Thyroid gland (tissue), 4 donors: ENCODE measurements at regions of chr9 and their contacts with region 1.

Region 1: GRCh38 chr9:137305060-137305797 is 3.2 kb upstream of the NRARP start:
- DNase-seq: peak in 1 of 2 donors; percentile 27
- H3K4me3 ChIP-seq: no peak overlapping the region
- H3K27ac ChIP-seq: peak overlapping the region; percentile 32 to 71 (median 68)
- H3K4me1 ChIP-seq: peaks cover 31 to 56% of the 10 kb centered on the region in 2 donors
- H3K27me3 ChIP-seq: no peaks in the 10 kb centered on the region
- CTCF ChIP-seq: no peak
- POLR2A ChIP-seq: no peak

Region 2: GRCh38 chr9:137070201-137070905 is 234.9 kb before region 1 on chr9 and contains the start of gene SAPCD2:
- intact Hi-C with region 1: no loop called
- DNase-seq: peak; percentile 93 to 95
- H3K4me3 ChIP-seq: peak within 1 kb of the TSS in 2 of 3 donors; percentile 37 to 44
- H3K27ac ChIP-seq: peak within 1 kb of the TSS; percentile 56 to 83 (median 73)
- H3K4me1 ChIP-seq: peaks cover 6 to 14% of the 10 kb centered on the region in 2 donors
- H3K27me3 ChIP-seq: no peaks in the 10 kb centered on the region
- CTCF ChIP-seq: peak in 1 of 6 experiments; percentile 11
- POLR2A ChIP-seq: peak in 1 of 2 donors; percentile 21
- total RNA-seq, gene SAPCD2: 0.27 to 1.0 (median 0.72) TPM

Region 3: GRCh38 chr9:137095664-137096517 is 209.3 kb before region 1 on chr9:
- intact Hi-C with region 1: no loop called
- DNase-seq: no peak
- H3K4me3 ChIP-seq: no peak overlapping the region
- H3K27ac ChIP-seq: no peak overlapping the region
- H3K4me1 ChIP-seq: no peaks in the 10 kb centered on the region
- H3K27me3 ChIP-seq: no peaks in the 10 kb centered on the region
- CTCF ChIP-seq: no peak
- POLR2A ChIP-seq: no peak

Region 4: DNA sequence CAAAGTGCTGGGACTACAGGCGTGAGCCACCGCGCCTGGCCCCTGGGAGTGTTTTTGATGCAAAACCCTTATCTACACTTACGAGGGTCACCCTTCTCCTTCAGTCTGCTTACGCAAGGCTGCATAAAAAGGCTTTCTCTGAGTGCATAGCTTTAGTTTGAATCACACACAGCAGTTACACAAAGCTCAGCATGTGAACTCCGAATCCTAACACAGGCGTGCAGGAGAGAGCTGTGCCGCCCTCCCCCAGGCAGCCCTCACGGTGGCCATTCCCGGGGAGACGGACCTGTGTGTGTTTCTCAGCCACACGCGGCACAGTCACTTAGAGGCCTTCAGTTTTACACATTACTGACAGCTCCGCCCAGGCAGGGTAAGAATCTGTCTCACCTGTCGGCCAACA is 91.0 kb after region 1 on chr9:
- intact Hi-C with region 1: loop called (anchors 5 kb)
- DNase-seq: no peak
- H3K4me3 ChIP-seq: no peak overlapping the region
- H3K27ac ChIP-seq: no peak overlapping the region
- H3K4me1 ChIP-seq: peaks cover 8 to 18% of the 10 kb centered on the region in 2 donors
- H3K27me3 ChIP-seq: no peaks in the 10 kb centered on the region
- CTCF ChIP-seq: no peak
- POLR2A ChIP-seq: no peak